Activated CD8-positive, alpha-beta T cell treated with anti-CD3 and anti-CD28 coated beads for 36 hours (primary cell): ENCODE measurements at regions of chr4 and their contacts with region 1.

Region 1: DNA sequence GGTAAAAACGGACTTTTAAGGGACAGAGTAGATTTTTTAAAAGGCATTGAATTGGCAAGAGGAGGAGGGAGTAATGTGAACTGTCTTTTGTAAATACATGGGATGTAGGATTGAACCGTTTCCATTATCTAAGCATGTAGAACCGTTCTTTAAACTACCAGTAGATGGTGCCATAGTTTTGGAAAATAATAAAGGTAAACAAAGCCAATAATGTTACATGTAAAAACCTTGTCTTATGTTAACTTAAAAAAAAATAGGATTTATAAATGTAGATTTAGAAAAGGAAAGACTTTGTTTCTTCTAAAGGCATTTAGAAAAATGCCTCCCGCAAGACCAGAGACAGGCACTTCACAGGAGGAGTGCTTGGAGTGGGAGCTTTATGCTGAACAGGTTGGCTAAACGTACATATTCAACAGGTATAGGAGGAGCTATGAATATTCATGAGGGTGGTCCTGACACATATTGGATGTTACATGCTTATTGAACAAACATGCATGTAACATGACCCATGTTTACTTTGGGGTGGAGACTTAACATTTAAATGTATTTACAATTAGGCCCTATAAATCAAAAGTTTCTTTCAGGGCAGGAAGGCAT is 45.5 kb upstream of the FAM241A start:
- DNase-seq: no peak
- ATAC-seq: peak; percentile 58
- H3K4me3 Mint-ChIP-seq: no peak overlapping the region
- H3K27ac Mint-ChIP-seq: no peak overlapping the region
- H3K4me1 Mint-ChIP-seq: peaks cover 3% of the 10 kb centered on the region
- H3K27me3 Mint-ChIP-seq: peaks cover 6% of the 10 kb centered on the region
- CTCF ChIP-seq: peak; percentile 72

Region 2: GRCh38 chr4:112119353-112119783 is 19.6 kb after region 1 on chr4:
- CTCF ChIA-PET with region 1: interaction called, 12 read pairs
- POLR2A ChIA-PET with region 1: no interaction called
- intact Hi-C with region 1: no loop called
- DNase-seq: peak; percentile 40
- ATAC-seq: peak; percentile 91
- H3K4me3 Mint-ChIP-seq: peak overlapping the region; percentile 36
- H3K27ac Mint-ChIP-seq: peak overlapping the region; percentile 95
- H3K4me1 Mint-ChIP-seq: peaks cover 16% of the 10 kb centered on the region
- H3K27me3 Mint-ChIP-seq: no peaks in the 10 kb centered on the region
- CTCF ChIP-seq: no peak

Region 3: GRCh38 chr4:112231779-112232713 is 132.2 kb after region 1 on chr4 and contains the start of gene AP1AR:
- CTCF ChIA-PET with region 1: interaction called, 110 read pairs
- POLR2A ChIA-PET with region 1: interaction called, 5 read pairs
- intact Hi-C with region 1: loop called (anchors 1 kb)
- DNase-seq: peak; percentile 87
- ATAC-seq: peak; percentile 66
- H3K4me3 Mint-ChIP-seq: peak within 1 kb of the TSS; percentile 93
- H3K27ac Mint-ChIP-seq: peak within 1 kb of the TSS; percentile 95
- H3K4me1 Mint-ChIP-seq: peaks cover 34% of the 10 kb centered on the region
- H3K27me3 Mint-ChIP-seq: peaks cover under 1% of the 10 kb centered on the region
- CTCF ChIP-seq: peak; percentile 13
- total RNA-seq, gene AP1AR: 15.5 to 17.7 TPM

Region 4: DNA sequence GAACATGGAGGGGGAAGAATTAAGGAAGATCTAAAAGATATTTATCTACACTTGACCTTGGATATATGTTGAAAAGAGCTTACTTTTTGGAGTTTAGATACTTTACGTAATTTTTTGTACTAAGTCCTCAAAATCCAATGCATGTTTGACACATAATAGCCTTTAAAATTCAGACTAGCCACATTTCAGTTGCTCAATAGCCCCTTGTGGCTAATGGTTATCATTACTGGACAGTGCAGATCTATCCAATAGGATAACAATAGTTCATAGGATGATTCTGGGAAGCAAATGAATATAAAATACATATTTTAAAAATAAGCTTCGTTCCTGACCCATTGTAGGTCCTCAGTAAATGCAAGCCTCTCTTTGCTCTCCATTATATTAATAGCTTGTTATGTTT is 145.6 kb after region 1 on chr4:
- CTCF ChIA-PET with region 1: interaction called, 33 read pairs
- POLR2A ChIA-PET with region 1: no interaction called
- intact Hi-C with region 1: no loop called
- DNase-seq: no peak
- ATAC-seq: no peak
- H3K4me3 Mint-ChIP-seq: no peak overlapping the region
- H3K27ac Mint-ChIP-seq: no peak overlapping the region
- H3K4me1 Mint-ChIP-seq: peaks cover 7% of the 10 kb centered on the region
- H3K27me3 Mint-ChIP-seq: no peaks in the 10 kb centered on the region
- CTCF ChIP-seq: no peak

Region 5: DNA sequence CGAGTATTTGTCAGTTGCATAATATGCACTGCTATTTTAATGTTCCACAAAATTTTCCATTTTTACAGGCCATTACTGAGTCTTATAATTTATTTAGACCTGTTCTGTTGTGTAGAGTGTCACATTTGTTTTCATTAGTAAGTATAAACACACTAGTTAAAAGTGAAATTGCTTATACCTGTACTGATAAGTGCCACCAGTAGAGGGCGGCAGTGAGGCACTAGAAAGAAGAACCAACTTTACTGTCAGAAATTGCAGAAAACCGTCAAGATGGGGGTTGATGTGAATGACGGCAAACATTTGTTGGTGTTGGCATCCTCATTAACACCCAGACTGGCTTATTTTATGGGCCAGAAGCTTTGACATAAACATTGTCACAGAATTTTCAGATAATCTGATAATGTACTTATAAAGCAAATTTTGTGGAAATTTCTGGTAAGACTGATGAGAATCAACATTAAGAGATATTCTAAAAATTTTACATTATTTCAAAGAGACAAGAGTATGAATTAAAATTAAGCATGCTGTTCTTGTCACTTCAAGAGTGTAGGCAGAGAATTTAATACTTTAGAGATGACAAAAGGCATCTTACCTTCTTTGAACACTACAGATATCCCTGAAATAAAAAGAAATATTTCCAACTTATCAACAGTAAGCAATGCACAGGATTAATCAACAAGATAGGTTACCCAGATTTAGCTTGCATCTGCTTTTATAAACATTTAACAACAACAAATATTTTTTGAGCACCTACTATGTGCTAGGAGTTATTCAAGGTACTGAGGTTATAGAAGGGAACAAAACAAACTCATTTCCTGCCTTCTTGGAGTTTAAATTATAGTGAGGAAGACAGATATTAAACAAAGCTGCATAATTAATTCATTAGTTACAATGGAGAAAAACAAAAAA is 222.2 kb after region 1 on chr4:
- CTCF ChIA-PET with region 1: interaction called, 10 read pairs
- POLR2A ChIA-PET with region 1: no interaction called
- intact Hi-C with region 1: no loop called
- DNase-seq: peak; percentile 92
- ATAC-seq: peak; percentile 92
- H3K4me3 Mint-ChIP-seq: no peak overlapping the region
- H3K27ac Mint-ChIP-seq: no peak overlapping the region
- H3K4me1 Mint-ChIP-seq: peaks cover 10% of the 10 kb centered on the region
- H3K27me3 Mint-ChIP-seq: no peaks in the 10 kb centered on the region
- CTCF ChIP-seq: peak; percentile 96

Region 6: DNA sequence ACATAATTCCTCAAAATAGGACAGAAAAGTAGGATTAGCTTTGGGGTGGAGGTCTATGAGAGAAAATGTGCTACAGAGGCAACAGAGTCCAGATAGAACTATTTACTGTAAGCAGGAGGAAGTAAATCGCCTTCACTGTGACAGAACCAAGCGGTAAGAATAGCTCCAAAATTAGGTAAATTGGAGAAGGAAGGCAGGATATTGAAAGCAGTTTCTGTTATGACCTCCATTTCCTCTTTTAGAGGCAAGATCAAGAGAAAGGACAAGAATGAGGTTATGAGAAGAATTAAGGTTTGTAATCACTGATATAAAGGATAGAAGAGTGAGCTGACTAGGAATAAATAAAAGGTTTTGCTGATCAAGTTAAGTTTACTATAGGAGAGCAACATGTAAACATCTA is 460.3 kb after region 1 on chr4:
- CTCF ChIA-PET with region 1: no interaction called
- POLR2A ChIA-PET with region 1: no interaction called
- intact Hi-C with region 1: no loop called
- DNase-seq: no peak
- ATAC-seq: no peak
- H3K4me3 Mint-ChIP-seq: no peak overlapping the region
- H3K27ac Mint-ChIP-seq: no peak overlapping the region
- H3K4me1 Mint-ChIP-seq: no peaks in the 10 kb centered on the region
- H3K27me3 Mint-ChIP-seq: no peaks in the 10 kb centered on the region
- CTCF ChIP-seq: no peak